GM12878 (cell line): ENCODE measurements at regions of chr1 and their contacts with region 1.

Region 1: DNA sequence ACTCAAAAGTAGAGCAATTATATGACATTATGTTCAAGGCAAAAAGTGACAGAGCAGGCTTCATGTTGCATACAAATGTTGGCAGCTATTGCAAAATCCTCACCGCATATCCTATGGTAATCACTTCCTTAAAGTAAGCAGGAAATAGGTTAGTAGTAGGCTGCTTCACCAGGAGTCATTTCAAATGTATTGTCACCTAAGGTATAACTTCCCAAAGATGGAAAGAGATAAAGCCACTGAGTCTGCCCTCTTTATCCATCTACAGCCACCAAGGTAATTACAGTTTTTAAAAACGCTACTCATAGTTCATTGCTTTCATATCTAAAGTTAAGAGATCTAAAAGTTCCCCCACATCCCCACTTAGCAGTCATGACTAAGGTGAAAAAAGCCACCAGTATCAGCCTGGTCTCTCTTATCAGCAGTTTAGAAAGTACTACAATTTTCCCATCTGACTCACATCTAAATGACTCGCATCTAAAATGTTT is 31.6 kb upstream of the UBE2U start:
- DNase-seq: peak; percentile 21
- ATAC-seq: peak; percentile 94
- H3K4me3 ChIP-seq: no peak overlapping the region
- H3K27ac ChIP-seq: peak overlapping the region; percentile 54
- H3K4me1 ChIP-seq: peaks cover 14% of the 10 kb centered on the region
- H3K27me3 ChIP-seq: no peaks in the 10 kb centered on the region
- CTCF ChIP-seq: no peak
- EP300 ChIP-seq: no peak
- POLR2A ChIP-seq: no peak
- RAD21 ChIP-seq: no peak

Region 2: DNA sequence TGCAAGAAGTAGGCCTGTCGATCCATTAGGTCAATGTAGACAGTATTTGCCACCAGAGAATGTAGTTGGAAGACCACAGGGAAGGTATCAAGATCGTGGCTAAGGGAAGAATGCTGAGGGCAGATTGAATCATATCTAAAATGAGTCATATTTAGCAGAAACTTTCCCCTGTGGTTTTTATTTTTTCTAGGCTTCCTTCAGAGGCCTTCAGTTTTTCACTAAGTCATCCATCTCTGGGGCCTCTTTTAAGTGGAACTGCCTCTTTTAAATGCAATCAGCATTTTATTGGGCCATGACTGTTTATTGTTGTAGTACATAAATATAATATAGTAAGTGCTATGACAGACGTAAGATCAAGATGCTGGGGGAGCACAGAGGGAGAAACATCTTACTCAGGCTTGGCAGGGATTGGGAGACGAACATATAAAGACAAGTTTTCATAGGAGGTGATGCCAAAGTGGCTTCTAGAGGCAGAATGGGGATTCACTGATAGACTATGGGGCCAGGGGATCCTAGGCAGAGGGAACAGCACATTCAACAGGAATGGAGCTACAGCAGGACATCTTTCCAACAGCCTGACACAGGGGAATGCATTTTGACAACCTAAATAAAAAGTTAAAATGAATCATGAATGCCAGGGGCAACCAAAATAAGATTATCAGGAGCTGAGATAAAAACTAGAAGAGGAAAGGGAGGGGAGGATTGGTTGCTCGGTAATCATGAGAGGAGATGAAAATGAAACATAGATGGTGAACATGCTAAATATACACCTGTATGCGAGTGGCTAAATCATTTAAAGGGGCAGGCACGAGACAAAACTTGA is 51.7 kb after region 1 on chr1:
- CTCF ChIA-PET with region 1: no interaction called
- POLR2A ChIA-PET with region 1: no interaction called
- RAD21 ChIA-PET with region 1: no interaction called
- SMC1A ChIA-PET with region 1: no interaction called
- in situ Hi-C with region 1: no loop called
- intact Hi-C with region 1: loop called (anchors 2 kb)
- DNase-seq: peak; percentile 19
- ATAC-seq: peak; percentile 92
- H3K4me3 ChIP-seq: peak overlapping the region; percentile 29; the same call in 1 of the 2 replicates
- H3K27ac ChIP-seq: no peak overlapping the region
- H3K4me1 ChIP-seq: peaks cover 2% of the 10 kb centered on the region
- H3K27me3 ChIP-seq: no peaks in the 10 kb centered on the region
- CTCF ChIP-seq: no peak
- EP300 ChIP-seq: no peak
- POLR2A ChIP-seq: no peak
- RAD21 ChIP-seq: no peak